A549 (cell line): ENCODE measurements at regions of chr15 and their contacts with region 1.

Region 1: DNA sequence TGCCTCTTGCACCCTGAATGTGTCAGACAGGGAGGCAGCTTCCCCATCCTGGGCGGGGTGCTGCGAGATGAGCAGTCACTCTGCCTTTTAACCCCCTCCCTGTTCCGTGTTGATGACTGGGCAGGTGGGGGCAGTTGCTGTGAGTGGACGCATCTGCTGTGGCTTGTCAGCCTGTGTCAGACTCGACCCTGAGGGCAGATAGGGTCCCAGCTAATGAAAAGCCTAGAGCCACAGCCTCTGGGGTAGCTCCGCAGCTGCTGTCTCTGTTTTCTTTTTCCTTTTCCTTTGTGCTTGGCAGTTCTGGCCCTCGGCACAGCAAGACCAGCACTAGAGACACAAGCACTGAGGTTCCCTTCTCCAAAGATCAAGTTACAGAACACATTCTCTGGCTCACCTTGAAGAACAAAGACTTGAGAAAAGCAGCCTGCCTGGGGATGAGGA is 43.0 kb upstream of the GLCE start:
- DNase-seq: no peak
- ATAC-seq: no peak
- H3K4me3 ChIP-seq: no peak overlapping the region
- H3K27ac ChIP-seq: no peak overlapping the region
- H3K4me1 ChIP-seq: no peaks in the 10 kb centered on the region
- CTCF ChIP-seq: no peak
- EP300 ChIP-seq: no peak
- POLR2A ChIP-seq: no peak
- RAD21 ChIP-seq: no peak

Region 2: DNA sequence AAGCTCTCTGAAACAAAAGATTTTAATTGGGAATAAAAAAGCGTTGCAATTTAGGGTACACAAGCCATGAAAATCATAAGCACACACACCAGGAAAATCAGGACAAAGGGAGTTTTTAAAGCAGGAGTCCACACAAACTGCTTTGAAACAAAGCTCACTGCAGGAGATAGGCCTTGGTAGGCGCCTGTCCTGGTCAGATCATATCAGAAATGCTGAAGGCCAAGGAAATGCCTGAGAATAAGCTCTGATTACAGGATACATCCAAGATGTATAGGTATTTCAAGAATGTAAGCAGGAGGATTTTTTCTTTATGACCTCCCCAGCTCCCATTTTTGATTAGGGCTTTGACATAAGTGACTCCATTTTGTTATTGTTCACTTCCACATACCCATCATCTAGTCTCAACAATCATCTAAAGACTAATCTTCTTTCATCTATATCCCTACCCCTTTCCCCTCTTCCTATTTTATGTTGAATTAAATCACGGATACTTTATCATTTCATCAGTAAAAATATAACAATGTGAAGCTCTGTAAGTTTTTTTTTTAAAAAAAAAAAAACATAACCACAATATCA is 168.4 kb before region 1 on chr15:
- CTCF ChIA-PET with region 1: no interaction called
- POLR2A ChIA-PET with region 1: no interaction called
- DNase-seq: no peak
- ATAC-seq: no peak
- H3K4me3 ChIP-seq: no peak overlapping the region
- H3K27ac ChIP-seq: no peak overlapping the region
- H3K4me1 ChIP-seq: no peaks in the 10 kb centered on the region
- CTCF ChIP-seq: no peak
- EP300 ChIP-seq: no peak
- POLR2A ChIP-seq: no peak
- RAD21 ChIP-seq: no peak

Region 3: GRCh38 chr15:69132977-69133861 is 15.8 kb after region 1 on chr15:
- CTCF ChIA-PET with region 1: interaction called, 10 read pairs
- POLR2A ChIA-PET with region 1: no interaction called
- DNase-seq: peak in 1 of 2 experiments; percentile 20
- ATAC-seq: peak in 1 of 2 experiments; percentile 34; a peak in 2 of 6 replicates
- H3K4me3 ChIP-seq: no peak overlapping the region
- H3K27ac ChIP-seq: no peak overlapping the region
- H3K4me1 ChIP-seq: peaks cover 7% of the 10 kb centered on the region; the same call in 1 of the 3 replicates
- CTCF ChIP-seq: no peak
- EP300 ChIP-seq: no peak
- POLR2A ChIP-seq: no peak
- RAD21 ChIP-seq: no peak